Right ventricle myocardium superior (tissue), 1 donor: ENCODE measurements at regions of chr7 and their contacts with region 1.

Region 1: GRCh38 chr7:55280031-55280454 is 85.1 kb upstream of the LANCL2 start:
- DNase-seq: no peak
- ATAC-seq: peak; percentile 94

Region 2: GRCh38 chr7:55415173-55415778 is 135.2 kb after region 1 on chr7:
- intact Hi-C with region 1: loop called (anchors 2 kb)
- DNase-seq: peak; percentile 76
- ATAC-seq: peak; percentile 92

Region 3: GRCh38 chr7:55593515-55594318 is 313.7 kb after region 1 on chr7:
- intact Hi-C with region 1: loop called (anchors 10 kb)
- DNase-seq: peak; percentile 78
- ATAC-seq: peak; percentile 72